CD4-positive, alpha-beta T cell (primary cell): ENCODE measurements at regions of chr16 and their contacts with region 1.

Region 1: GRCh38 chr16:83807710-83808572 is at the start of gene HSBP1:
- DNase-seq: peak; percentile 89 to 96 (median 91)
- ATAC-seq: peak; percentile 99
- H3K4me3 ChIP-seq: peak within 1 kb of the TSS; percentile 86
- H3K4me3 Mint-ChIP-seq: peak within 1 kb of the TSS; percentile 100
- H3K27ac ChIP-seq: peak within 1 kb of the TSS; percentile 46 to 74
- H3K27ac Mint-ChIP-seq: peak within 1 kb of the TSS; percentile 93
- H3K4me1 ChIP-seq: peaks cover 28% of the 10 kb centered on the region
- H3K4me1 Mint-ChIP-seq: peaks cover 43% of the 10 kb centered on the region
- H3K27me3 ChIP-seq: no peaks in the 10 kb centered on the region
- H3K27me3 Mint-ChIP-seq: no peaks in the 10 kb centered on the region
- CTCF ChIP-seq: no peak
- total RNA-seq, gene HSBP1: 17.4 to 21.9 TPM

Region 2: GRCh38 chr16:83898463-83899271 is 90.7 kb after region 1 on chr16 and contains the start of gene MLYCD:
- CTCF ChIA-PET with region 1: no interaction called
- POLR2A ChIA-PET with region 1: interaction called, 3 read pairs
- intact Hi-C with region 1: loop called (anchors 2 to 5 kb)
- DNase-seq: peak; percentile 40 to 88 (median 63)
- ATAC-seq: peak; percentile 92
- H3K4me3 ChIP-seq: peak within 1 kb of the TSS; percentile 70
- H3K4me3 Mint-ChIP-seq: peak within 1 kb of the TSS; percentile 99
- H3K27ac ChIP-seq: no peak within 1 kb of the TSS
- H3K27ac Mint-ChIP-seq: peak within 1 kb of the TSS; percentile 83
- H3K4me1 ChIP-seq: peaks cover 12% of the 10 kb centered on the region
- H3K4me1 Mint-ChIP-seq: peaks cover 46% of the 10 kb centered on the region
- H3K27me3 ChIP-seq: no peaks in the 10 kb centered on the region
- H3K27me3 Mint-ChIP-seq: no peaks in the 10 kb centered on the region
- CTCF ChIP-seq: no peak
- total RNA-seq, gene MLYCD: 4.7 to 5.3 TPM